ENCODE measurements at regions of chr1 and their contacts with region 1.

Region 1: GRCh38 chr1:85464497-85465098 is 361 bp downstream of the DDAH1 start:
- DNase-seq: peak; percentile 63 to 90 (median 74)
- ATAC-seq: peak; percentile 47 to 77 (median 71)
- H3K4me3 ChIP-seq: peak overlapping the region; percentile 58 to 83 (median 70)
- H3K27ac ChIP-seq: peak overlapping the region; percentile 76 to 93 (median 91)
- H3K4me1 ChIP-seq: peaks cover 31 to 43% (median 35%) of the 10 kb centered on the region in 3 donors
- H3K27me3 ChIP-seq: no peaks in the 10 kb centered on the region
- CTCF ChIP-seq: no peak

Region 2: DNA sequence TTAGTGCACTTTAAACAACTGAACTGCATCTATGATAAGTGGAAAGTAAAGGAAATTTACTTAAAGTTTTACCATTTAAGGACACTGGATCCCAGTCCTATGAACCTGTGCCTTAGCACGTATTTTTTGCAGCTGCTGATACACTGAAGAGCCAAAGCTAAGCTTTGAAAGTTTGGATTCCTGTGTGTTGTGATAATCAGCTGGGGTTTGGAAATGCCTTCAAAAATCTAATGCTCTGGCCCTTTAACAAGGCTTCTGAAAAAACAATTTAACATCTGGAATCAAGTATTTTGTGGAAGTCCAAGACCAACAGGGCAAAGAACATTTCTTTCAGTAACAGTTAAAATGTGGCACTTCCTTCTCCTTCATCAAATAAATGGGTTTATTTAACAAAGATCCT is 51.4 kb before region 1 on chr1:
- intact Hi-C with region 1: loop called in 1 of 3 experiments (anchors 10 kb)
- DNase-seq: no peak
- ATAC-seq: no peak
- H3K4me3 ChIP-seq: no peak overlapping the region
- H3K27ac ChIP-seq: no peak overlapping the region
- H3K4me1 ChIP-seq: peaks cover 0 to under 1% (median under 1%) of the 10 kb centered on the region in 3 donors
- H3K27me3 ChIP-seq: no peaks in the 10 kb centered on the region
- CTCF ChIP-seq: no peak

Measured in pancreas (tissue), 10 donors.